Activated CD8-positive, alpha-beta T cell treated with anti-CD3 and anti-CD28 coated beads for 36 hours (primary cell): ENCODE measurements at regions of chr3 and their contacts with region 1.

Region 1: DNA sequence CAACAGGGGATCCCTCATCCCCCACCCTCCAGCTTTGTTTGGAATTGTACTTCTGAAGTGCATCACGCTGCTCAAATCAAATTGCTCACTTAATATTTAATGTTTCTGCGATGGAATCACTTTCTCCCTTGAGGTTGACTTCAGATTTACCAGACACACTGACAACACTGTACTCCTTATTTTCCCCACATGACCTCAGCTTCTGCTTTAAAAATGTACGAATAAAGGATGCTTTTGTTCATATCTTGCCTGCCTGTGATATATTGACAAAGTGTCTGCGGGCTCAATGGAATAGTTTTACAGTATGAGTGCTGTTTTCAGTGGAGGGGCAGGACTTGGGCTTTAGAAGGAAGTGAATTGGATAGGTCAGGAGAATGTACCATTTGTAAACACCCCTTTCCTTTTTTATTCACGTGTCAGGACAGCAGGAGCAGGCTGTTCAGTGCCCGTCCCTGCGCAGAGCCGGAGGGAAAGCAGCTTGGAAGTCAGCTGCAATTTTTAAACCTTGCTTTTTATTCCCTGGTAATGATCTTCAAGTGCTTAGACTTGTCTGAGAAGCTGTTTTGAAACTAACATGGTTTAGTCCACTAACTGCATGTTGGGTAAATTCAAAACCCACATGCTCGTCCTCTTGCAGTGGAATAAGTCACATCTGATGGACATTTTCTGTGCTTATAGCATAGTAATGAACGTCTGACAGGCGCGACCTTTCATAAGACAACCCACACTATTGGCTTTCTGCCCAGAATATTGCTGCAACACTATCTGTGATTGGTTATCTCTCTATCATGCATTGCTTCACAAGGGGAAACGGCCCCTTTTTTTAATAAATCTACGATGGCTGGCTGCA is 29.9 kb downstream of the MBNL1 start:
- DNase-seq: peak; percentile 80
- ATAC-seq: peak; percentile 87
- H3K4me3 Mint-ChIP-seq: peak overlapping the region; percentile 73
- H3K27ac Mint-ChIP-seq: peak overlapping the region; percentile 96
- H3K4me1 Mint-ChIP-seq: peaks cover 74% of the 10 kb centered on the region
- H3K27me3 Mint-ChIP-seq: no peaks in the 10 kb centered on the region
- CTCF ChIP-seq: no peak

Region 2: DNA sequence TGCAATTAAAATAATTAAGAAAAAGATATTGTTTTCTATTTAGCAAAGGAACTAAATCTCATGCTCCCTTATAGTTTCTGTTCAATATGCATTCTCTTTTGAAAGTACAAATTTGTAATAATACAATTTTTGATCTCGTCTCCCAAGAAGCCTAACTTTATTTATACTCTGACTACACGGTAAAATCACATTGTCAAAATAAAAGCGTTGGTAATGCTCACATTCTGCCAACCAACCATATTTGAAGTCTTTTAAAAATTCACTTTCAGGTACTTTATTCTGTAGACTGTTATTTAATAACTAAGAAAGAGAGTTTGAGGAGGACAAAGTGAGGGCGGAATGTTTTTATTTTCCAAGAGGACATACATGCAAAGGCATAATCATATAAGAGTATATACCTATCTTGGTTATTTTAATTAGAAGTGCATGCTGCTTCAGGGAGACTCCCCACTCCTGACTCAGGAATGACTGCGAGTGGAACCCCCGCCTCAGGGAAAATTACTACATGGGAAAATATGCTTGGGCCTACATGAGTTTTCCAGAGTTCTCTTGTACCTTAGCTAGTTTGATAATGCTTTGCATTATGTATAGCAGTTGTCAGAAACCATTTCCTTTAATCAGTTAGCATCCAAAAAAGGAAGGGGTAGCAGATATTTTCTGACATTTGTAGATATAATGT is 10.6 kb before region 1 on chr3:
- CTCF ChIA-PET with region 1: interaction called, 4 read pairs
- POLR2A ChIA-PET with region 1: interaction called, 11 read pairs
- intact Hi-C with region 1: no loop called
- DNase-seq: no peak
- ATAC-seq: no peak
- H3K4me3 Mint-ChIP-seq: peak overlapping the region; percentile 44
- H3K27ac Mint-ChIP-seq: peak overlapping the region; percentile 21
- H3K4me1 Mint-ChIP-seq: peaks cover 78% of the 10 kb centered on the region
- H3K27me3 Mint-ChIP-seq: no peaks in the 10 kb centered on the region
- CTCF ChIP-seq: no peak

Region 3: DNA sequence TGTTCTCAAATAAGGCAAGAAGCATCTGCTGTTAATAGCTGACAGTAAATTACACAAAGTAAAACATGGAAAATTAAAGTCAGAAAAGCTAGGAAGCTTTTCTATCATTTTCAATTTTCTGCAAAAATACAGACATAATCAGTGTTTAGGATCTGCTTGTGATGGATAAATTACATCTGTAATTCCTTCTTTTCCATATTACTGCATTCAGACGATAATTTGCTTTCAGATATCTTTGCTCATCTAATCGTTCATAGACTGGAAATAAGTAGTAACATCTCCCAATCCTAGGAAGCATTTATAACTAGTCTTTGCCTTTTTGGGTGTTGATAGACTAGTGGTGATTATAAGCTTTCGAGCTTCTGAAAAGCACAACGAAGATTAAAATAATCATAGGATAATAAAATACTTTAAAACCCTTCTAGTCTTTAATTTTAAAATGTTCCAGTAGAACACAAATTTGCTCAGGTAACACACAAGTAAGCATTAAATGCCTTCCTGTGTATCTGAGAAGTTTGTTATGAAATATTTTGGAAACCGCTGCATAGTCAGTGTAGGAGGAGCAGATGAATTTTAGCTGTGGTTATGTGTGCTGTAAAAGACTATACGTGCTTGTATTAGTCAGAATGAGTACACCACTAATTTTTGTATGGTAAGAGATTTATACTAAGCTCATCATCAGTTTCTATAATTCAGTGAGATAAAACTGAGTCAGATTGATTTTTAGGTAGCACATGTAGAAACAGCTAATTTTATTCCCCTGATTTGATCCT is 11.1 kb after region 1 on chr3:
- CTCF ChIA-PET with region 1: interaction called, 13 read pairs
- POLR2A ChIA-PET with region 1: interaction called, 4 read pairs
- intact Hi-C with region 1: no loop called
- DNase-seq: no peak
- ATAC-seq: peak; percentile 93
- H3K4me3 Mint-ChIP-seq: no peak overlapping the region
- H3K27ac Mint-ChIP-seq: peak overlapping the region; percentile 70
- H3K4me1 Mint-ChIP-seq: peaks cover 75% of the 10 kb centered on the region
- H3K27me3 Mint-ChIP-seq: no peaks in the 10 kb centered on the region
- CTCF ChIP-seq: no peak